ENCODE measurements at regions of chr2 and their contacts with region 1.

Region 1: GRCh38 chr2:25851740-25852503 is 26.4 kb downstream of the ASXL2 start:
- DNase-seq: peak; percentile 38
- H3K4me3 Mint-ChIP-seq: peak overlapping the region; percentile 53
- H3K27ac Mint-ChIP-seq: peak overlapping the region; percentile 78
- H3K4me1 Mint-ChIP-seq: peaks cover 51% of the 10 kb centered on the region
- H3K27me3 Mint-ChIP-seq: no peaks in the 10 kb centered on the region

Region 2: GRCh38 chr2:24969784-24970183 is 882.1 kb before region 1 on chr2:
- CTCF ChIA-PET with region 1: no interaction called
- POLR2A ChIA-PET with region 1: no interaction called
- intact Hi-C with region 1: no loop called
- DNase-seq: no peak
- H3K4me3 Mint-ChIP-seq: no peak overlapping the region
- H3K27ac Mint-ChIP-seq: no peak overlapping the region
- H3K4me1 Mint-ChIP-seq: peaks cover 6% of the 10 kb centered on the region
- H3K27me3 Mint-ChIP-seq: no peaks in the 10 kb centered on the region

Region 3: DNA sequence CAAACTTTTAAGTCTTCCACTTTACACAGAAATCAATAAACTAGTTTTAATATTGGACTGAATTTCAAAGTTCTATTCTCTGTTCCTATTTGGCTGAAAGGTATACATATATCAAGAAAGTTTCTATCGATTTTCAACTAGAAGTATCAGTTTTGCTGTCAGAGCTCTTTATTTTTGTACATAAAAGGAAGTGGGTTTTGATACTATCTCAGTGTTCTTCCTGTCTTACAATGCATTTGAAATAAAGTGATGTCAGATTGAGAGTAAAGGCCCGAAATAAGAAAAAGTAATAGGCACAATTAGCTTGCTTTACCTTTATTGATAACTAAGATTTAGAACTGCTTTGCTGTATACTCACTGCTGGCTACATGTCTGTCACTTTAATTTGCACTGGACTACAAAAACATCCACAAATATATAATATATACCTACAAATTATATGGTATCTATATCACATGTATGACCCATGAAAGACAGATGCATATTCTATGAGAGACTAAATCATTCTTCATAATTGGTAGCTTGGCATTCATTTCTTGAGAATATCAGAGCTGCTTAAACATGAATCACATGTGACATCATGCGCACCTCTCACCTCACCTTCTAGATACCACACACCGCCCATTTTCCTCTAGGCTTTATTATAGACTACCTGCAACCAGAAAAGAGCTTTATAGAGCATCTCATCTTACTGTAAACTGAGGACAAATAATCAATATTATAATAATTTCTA is 57.2 kb before region 1 on chr2:
- CTCF ChIA-PET with region 1: interaction called, 30 read pairs
- POLR2A ChIA-PET with region 1: interaction called, 9 read pairs
- intact Hi-C with region 1: loop called (anchors 2 kb)
- DNase-seq: no peak
- H3K4me3 Mint-ChIP-seq: peak overlapping the region; percentile 66
- H3K27ac Mint-ChIP-seq: peak overlapping the region; percentile 81
- H3K4me1 Mint-ChIP-seq: peaks cover 77% of the 10 kb centered on the region
- H3K27me3 Mint-ChIP-seq: no peaks in the 10 kb centered on the region

Region 4: GRCh38 chr2:25822190-25823117 is 29.5 kb before region 1 on chr2:
- CTCF ChIA-PET with region 1: interaction called, 15 read pairs
- POLR2A ChIA-PET with region 1: interaction called, 13 read pairs
- intact Hi-C with region 1: loop called (anchors 1 kb)
- DNase-seq: peak; percentile 77
- H3K4me3 Mint-ChIP-seq: peak overlapping the region; percentile 68
- H3K27ac Mint-ChIP-seq: peak overlapping the region; percentile 51
- H3K4me1 Mint-ChIP-seq: peaks cover 61% of the 10 kb centered on the region
- H3K27me3 Mint-ChIP-seq: peaks cover 1% of the 10 kb centered on the region

Region 5: DNA sequence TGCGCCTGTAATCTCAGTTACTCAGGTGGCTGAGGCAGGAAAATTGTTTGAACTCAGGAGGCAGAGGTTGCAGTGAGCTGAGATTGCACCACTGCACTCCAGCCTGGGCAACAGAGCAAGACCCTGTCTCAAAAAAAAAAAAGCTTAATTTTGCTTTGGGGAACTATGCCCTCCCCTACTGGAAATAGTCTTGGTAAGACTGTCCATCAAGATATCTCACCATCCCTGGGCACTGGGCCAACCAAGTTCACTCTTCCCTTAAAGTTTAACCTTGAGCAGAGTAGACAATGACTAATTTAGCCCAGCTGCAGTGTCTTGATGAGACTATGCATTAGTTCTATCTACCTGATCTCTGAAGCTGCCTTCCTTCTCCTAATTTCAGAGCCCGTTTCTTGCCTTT is 18.4 kb before region 1 on chr2:
- CTCF ChIA-PET with region 1: interaction called, 15 read pairs
- POLR2A ChIA-PET with region 1: interaction called, 5 read pairs
- intact Hi-C with region 1: loop called (anchors 1 kb)
- DNase-seq: peak; percentile 39
- H3K4me3 Mint-ChIP-seq: no peak overlapping the region
- H3K27ac Mint-ChIP-seq: no peak overlapping the region
- H3K4me1 Mint-ChIP-seq: peaks cover 54% of the 10 kb centered on the region
- H3K27me3 Mint-ChIP-seq: no peaks in the 10 kb centered on the region

Region 6: DNA sequence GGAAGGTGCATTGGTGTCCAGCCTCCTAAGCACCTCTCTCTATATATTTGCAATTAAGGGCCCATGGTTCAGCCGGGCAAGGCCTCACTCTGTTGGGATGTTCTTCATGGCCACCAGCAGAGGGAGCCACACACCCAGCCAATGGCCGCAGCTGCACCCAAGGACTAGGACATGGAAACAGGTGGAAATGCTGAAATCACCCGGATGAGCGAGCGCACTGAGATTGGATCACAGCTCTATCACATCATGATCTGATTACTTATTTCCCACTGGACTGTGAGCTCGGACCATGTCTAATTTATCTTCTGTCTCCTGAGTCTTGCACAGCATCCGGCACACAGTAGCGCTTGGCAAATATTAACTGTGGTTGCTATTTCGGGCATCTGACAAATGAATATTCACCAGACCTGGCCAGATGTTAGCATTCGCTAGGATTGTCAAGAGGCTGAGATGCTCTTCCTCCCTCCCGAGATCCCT is 99.2 kb after region 1 on chr2:
- CTCF ChIA-PET with region 1: interaction called, 10 read pairs
- POLR2A ChIA-PET with region 1: no interaction called
- intact Hi-C with region 1: loop called (anchors 10 kb)
- DNase-seq: peak; percentile 81
- H3K4me3 Mint-ChIP-seq: no peak overlapping the region
- H3K27ac Mint-ChIP-seq: no peak overlapping the region
- H3K4me1 Mint-ChIP-seq: no peaks in the 10 kb centered on the region
- H3K27me3 Mint-ChIP-seq: no peaks in the 10 kb centered on the region

Region 7: GRCh38 chr2:26144953-26145680 is 293.2 kb after region 1 on chr2:
- CTCF ChIA-PET with region 1: no interaction called
- POLR2A ChIA-PET with region 1: no interaction called
- intact Hi-C with region 1: loop called (anchors 1 kb)
- DNase-seq: peak; percentile 78
- H3K4me3 Mint-ChIP-seq: no peak overlapping the region
- H3K27ac Mint-ChIP-seq: no peak overlapping the region
- H3K4me1 Mint-ChIP-seq: peaks cover 2% of the 10 kb centered on the region
- H3K27me3 Mint-ChIP-seq: peaks cover 13% of the 10 kb centered on the region

Measured in activated CD4-positive, alpha-beta memory T cell treated with anti-CD3 and anti-CD28 coated beads for 36 hours (primary cell).